ENCODE measurements at regions of chr12 and their contacts with region 1.

Region 1: DNA sequence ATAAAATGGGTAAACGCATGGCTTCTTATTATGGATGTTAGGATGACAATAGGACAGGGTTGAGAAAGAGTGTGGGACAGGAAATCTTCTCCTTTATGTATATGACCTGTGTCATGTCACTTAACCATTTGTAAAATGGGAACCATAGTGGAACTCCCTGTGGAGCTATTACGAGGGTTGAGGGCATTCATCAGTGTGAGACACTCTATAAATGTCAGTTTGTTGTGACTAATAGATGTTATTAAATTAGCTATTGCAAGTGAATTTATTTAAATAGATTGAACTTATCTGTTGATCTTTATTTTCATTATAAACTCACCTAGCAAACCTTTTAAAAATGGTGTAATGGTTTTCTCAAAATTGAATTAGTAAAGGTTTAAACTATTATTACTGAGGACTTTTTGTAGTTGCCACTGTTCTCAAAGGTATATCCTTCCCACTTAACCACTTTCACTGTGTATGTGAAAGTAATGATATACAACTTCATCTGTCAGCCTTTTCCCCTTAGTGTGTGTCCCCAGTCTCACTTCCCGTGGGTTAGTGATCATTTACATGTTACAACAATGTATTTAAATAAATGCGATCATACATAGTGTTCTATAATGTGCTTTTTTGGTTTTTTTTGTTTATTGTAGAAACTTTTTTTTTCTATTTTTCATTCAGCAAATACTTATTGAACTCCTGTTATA is 17.1 kb downstream of the HELB start:
- DNase-seq: no peak
- H3K4me3 Mint-ChIP-seq: no peak overlapping the region
- H3K27ac Mint-ChIP-seq: no peak overlapping the region
- H3K4me1 Mint-ChIP-seq: peaks cover 40% of the 10 kb centered on the region
- H3K27me3 Mint-ChIP-seq: no peaks in the 10 kb centered on the region

Region 2: GRCh38 chr12:66279123-66279712 is 40.2 kb before region 1 on chr12:
- intact Hi-C with region 1: loop called (anchors 5 kb)
- DNase-seq: peak; percentile 22
- H3K4me3 Mint-ChIP-seq: no peak overlapping the region
- H3K27ac Mint-ChIP-seq: no peak overlapping the region
- H3K4me1 Mint-ChIP-seq: peaks cover 40% of the 10 kb centered on the region
- H3K27me3 Mint-ChIP-seq: peaks cover 1% of the 10 kb centered on the region

Region 3: GRCh38 chr12:66573605-66574004 is 254.2 kb after region 1 on chr12:
- intact Hi-C with region 1: no loop called
- DNase-seq: no peak
- H3K4me3 Mint-ChIP-seq: no peak overlapping the region
- H3K27ac Mint-ChIP-seq: no peak overlapping the region
- H3K4me1 Mint-ChIP-seq: no peaks in the 10 kb centered on the region
- H3K27me3 Mint-ChIP-seq: peaks cover 2% of the 10 kb centered on the region

Measured in activated T-helper 1 cell treated with anti-CD3 and anti-CD28 coated beads, Interleukin-12 subunit alpha, Interleukin-12 subunit beta, Interleukin-2, Interleukin-4 antibody, amounts not matched to agents 30 ng/mL and 10 ng/mL and 1 ng/mL, durations not matched to agents 14 hours and 24 hours and 36 hours (primary cell).